Lower leg skin (tissue), 4 donors: ENCODE measurements at regions of chr11 and their contacts with region 1.

Region 1: GRCh38 chr11:105368711-105369110 is 229.1 kb upstream of the CARD18 start:
- DNase-seq: no peak
- H3K4me3 ChIP-seq: no peak overlapping the region
- CTCF ChIP-seq: no peak
- POLR2A ChIP-seq: no peak

Region 2: GRCh38 chr11:105244160-105244820 is 124.4 kb before region 1 on chr11:
- intact Hi-C with region 1: no loop called
- DNase-seq: peak in 1 of 2 donors; percentile 17
- H3K4me3 ChIP-seq: no peak overlapping the region
- CTCF ChIP-seq: no peak
- POLR2A ChIP-seq: no peak

Region 3: DNA sequence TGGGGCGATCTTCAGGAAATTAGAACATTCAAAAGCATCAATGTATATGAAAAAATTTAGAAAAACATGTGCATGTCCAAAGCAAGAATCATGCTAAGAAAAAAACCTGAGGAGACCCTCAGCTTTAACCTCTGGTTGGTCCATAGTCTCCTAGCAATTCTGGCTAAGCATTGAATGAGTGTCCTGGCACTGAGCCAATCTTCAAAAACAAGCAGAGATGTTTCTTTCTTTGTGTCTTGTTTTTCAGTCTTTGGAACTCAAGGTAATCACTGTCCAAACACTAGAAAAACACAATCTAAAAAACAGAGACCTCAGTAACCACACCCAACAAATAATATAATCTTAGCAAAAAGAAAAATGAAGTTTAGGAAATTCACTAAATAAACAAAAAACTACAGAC is 23.8 kb before region 1 on chr11:
- intact Hi-C with region 1: no loop called
- DNase-seq: no peak
- H3K4me3 ChIP-seq: no peak overlapping the region
- CTCF ChIP-seq: no peak
- POLR2A ChIP-seq: no peak

Region 4: GRCh38 chr11:105407101-105407500 is 38.4 kb after region 1 on chr11:
- intact Hi-C with region 1: loop called (anchors 2 kb)
- DNase-seq: no peak
- H3K4me3 ChIP-seq: no peak overlapping the region
- CTCF ChIP-seq: no peak
- POLR2A ChIP-seq: no peak